ENCODE measurements at regions of chr13 and their contacts with region 1.

Region 1: DNA sequence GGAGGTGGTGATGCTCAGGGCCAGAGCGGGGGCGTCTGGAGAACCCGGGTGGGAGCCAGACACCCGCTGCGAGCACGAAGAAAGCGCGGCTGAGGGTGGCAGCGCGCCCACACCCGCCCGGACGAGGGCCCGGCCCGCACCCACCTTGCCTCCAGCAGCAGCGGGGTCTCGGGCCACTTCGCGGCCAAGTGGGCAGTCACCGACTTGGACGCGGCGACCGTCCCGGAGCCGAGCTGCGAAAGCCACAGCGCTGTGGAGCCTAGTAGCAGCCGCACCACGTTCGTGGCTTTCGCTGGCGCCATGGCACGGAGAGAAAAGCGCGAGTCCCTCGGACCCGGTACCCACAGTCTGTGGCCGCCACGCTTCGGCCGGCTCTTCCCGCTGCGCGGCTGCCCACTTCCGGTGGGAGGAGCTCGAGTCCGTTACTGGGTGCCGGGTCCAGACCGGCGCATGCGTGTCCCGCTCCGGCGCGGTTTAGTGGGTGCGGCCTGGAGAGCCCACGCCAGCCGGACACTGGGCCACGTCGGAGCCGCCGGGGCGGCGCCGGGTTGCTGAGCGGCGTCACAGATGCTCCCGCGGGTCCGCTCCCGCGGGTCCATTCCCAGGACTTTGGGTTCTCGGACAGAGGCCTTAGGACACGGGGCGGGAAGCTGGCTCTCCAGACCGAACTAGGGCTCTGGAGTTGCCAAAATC is at the start of gene UGGT2:
- DNase-seq: peak; percentile 92 to 97
- H3K4me3 ChIP-seq: peak within 1 kb of the TSS; percentile 79 to 86
- H3K27ac ChIP-seq: peak within 1 kb of the TSS; percentile 81 to 91
- H3K4me1 ChIP-seq: peaks cover 0 to 10% (median 5%) of the 10 kb centered on the region in 4 donors
- H3K27me3 ChIP-seq: no peaks in the 10 kb centered on the region
- CTCF ChIP-seq: no peak

Region 2: DNA sequence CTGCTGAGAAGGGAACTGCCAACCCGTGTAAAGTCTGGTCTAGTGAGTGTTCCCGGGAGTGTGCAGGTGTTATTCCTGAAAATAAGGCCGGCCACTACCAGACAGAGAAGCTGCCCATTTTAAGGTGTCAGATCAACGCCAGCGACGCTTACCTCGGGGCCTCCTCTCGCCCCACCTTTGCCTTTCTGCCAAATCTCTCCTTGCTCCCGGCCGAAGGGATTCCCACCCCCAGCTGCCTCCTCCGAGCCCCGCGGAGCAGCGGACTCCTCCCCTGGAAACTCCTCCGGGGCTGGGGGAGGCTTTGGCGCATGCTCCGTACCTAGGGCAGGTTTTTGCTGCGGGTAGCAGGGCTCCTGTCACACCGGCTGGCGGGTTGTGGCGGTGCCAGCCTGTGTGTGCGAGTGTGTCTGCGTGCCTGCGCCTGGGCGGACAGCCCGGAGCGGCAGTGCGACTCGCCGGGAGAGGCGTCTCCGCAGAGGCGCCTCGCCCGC is 36.6 kb after region 1 on chr13 and contains the start of gene HS6ST3:
- intact Hi-C with region 1: loop called (anchors 5 kb)
- DNase-seq: peak in 1 of 2 donors; percentile 72
- H3K4me3 ChIP-seq: peak within 1 kb of the TSS; percentile 62 to 65
- H3K27ac ChIP-seq: peak within 1 kb of the TSS; percentile 61 to 72
- H3K4me1 ChIP-seq: peaks cover 3 to 21% (median 9%) of the 10 kb centered on the region in 4 donors
- H3K27me3 ChIP-seq: peaks cover 0 to 11% of the 10 kb centered on the region in 2 donors
- CTCF ChIP-seq: no peak

Region 3: DNA sequence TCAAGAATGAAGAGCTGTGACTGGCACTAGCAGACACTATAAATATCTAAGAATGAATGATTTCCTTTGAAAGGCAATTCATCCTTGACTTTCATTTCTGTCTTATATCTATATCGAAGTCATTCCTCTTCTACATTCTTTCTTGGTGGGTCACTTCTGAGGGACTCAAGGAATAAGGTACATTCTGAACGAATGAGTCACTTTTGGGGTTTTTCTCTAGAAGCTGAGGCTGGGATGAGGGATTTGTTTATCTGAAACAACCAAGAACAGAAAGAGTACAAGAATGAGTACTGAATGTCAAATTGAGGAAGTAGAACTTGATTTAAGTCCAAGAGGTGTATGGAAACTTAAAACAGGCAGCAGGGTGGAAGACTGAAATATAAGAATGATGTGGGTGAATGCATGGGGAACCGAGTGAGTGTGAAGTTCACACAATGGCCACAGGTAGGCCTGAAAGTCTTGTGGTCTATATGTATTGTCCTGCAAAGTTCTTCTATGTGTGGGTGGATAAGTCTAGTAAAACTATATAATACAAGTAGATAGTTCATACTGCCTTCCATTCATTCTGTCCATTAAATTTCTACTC is 597.2 kb after region 1 on chr13:
- intact Hi-C with region 1: no loop called
- DNase-seq: no peak
- H3K4me3 ChIP-seq: no peak overlapping the region
- H3K27ac ChIP-seq: peak overlapping the region; percentile 2 to 20
- H3K4me1 ChIP-seq: peaks cover 0 to 13% (median 5%) of the 10 kb centered on the region in 4 donors
- H3K27me3 ChIP-seq: no peaks in the 10 kb centered on the region
- CTCF ChIP-seq: peak in 1 of 2 experiments; percentile 5